ENCODE measurements at regions of chr21 and their contacts with region 1.

Region 1: GRCh38 chr21:21018821-21019220 is 20.6 kb downstream of the NCAM2 start:
- DNase-seq: peak in 1 of 7 donors; percentile 19
- H3K4me3 ChIP-seq: no peak overlapping the region
- H3K27ac ChIP-seq: no peak overlapping the region
- H3K4me1 ChIP-seq: peaks cover 0 to 6% of the 10 kb centered on the region in 2 donors
- H3K27me3 ChIP-seq: no peaks in the 10 kb centered on the region
- CTCF ChIP-seq: no peak
- POLR2A ChIP-seq: no peak

Region 2: GRCh38 chr21:20968391-20968790 is 50.4 kb before region 1 on chr21:
- intact Hi-C with region 1: no loop called
- DNase-seq: no peak
- H3K4me3 ChIP-seq: no peak overlapping the region
- H3K27ac ChIP-seq: no peak overlapping the region
- H3K4me1 ChIP-seq: no peaks in the 10 kb centered on the region
- H3K27me3 ChIP-seq: no peaks in the 10 kb centered on the region
- CTCF ChIP-seq: no peak
- POLR2A ChIP-seq: no peak

Region 3: DNA sequence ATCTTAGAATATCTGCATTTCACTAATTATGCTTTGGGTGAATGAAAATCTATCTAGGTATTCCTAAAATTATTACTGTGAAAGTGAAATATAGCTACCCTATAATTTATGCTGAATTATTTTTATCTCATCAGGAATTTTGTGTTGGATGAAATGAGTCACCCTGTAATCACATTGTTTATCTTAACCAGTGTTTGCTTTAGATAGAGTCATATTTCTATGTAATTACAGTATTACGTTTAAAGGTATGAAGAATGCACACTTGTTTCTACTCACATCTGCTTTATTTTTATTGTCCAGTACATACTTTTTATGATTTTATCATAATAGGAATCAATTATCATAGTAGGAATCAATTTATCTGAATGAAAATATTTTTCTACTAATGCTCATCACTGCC is 228.6 kb after region 1 on chr21:
- intact Hi-C with region 1: no loop called
- DNase-seq: no peak
- H3K4me3 ChIP-seq: no peak overlapping the region
- H3K27ac ChIP-seq: no peak overlapping the region
- H3K4me1 ChIP-seq: no peaks in the 10 kb centered on the region
- H3K27me3 ChIP-seq: no peaks in the 10 kb centered on the region
- CTCF ChIP-seq: no peak
- POLR2A ChIP-seq: no peak

Region 4: DNA sequence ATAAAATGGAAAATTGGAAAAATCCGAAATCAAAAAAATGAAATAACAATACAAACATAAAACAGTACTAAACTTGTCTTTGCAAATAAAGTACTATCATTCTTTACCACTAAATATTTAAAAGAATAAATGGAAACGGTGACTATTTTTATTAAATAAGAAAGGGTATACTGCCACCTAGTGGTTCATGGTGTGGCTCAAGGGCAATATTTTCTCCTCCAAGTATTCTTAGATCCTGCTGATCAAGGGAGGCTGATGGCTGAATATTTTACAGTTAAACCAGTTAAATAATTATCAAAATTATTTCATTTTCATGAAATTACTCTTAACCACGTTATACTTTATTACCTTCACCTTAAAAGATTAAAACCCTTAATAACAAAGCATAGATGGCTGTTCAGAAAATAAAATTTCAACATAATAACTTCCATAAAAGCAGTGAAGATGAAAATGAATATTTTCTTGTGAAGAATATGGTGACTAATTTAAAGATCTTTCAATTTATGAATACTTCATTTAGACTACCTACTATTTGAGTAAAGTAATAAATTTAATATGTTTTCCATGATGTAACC is 1773.3 kb after region 1 on chr21:
- intact Hi-C with region 1: loop called in 1 of 2 experiments (anchors 10 kb)
- DNase-seq: peak in 5 of 7 donors; percentile 15 to 63 (median 27)
- H3K4me3 ChIP-seq: no peak overlapping the region
- H3K27ac ChIP-seq: no peak overlapping the region
- H3K4me1 ChIP-seq: no peaks in the 10 kb centered on the region
- H3K27me3 ChIP-seq: no peaks in the 10 kb centered on the region
- CTCF ChIP-seq: peak; percentile 48 to 83 (median 74)
- POLR2A ChIP-seq: no peak

Measured in adrenal gland (tissue), 19 donors.